Psoas muscle (tissue), 8 donors: ENCODE measurements at regions of chr1 and their contacts with region 1.

Region 1: DNA sequence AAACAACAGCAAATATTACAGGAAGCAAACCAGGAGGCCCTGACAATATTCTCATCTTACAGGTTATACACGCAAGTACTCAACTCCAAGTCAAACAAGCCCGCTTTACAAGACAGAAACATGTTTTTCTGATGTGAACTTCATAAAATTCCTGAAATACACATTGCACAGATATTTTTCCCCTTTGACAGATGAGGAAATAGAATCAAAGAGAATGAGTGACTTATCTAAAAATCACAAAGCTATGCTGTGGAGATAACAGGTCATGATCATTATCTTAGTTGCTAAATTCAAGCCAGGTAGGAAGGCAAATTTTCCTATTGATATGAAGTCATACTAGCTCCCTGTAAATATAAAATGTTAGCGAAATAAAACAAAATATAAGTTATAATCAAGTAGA is 18.3 kb downstream of the UBR4 start:
- DNase-seq: no peak
- ATAC-seq: no peak
- H3K4me3 ChIP-seq: no peak overlapping the region
- H3K27ac ChIP-seq: no peak overlapping the region
- H3K4me1 ChIP-seq: no peaks in the 10 kb centered on the region
- H3K27me3 ChIP-seq: no peaks in the 10 kb centered on the region
- CTCF ChIP-seq: no peak

Region 2: DNA sequence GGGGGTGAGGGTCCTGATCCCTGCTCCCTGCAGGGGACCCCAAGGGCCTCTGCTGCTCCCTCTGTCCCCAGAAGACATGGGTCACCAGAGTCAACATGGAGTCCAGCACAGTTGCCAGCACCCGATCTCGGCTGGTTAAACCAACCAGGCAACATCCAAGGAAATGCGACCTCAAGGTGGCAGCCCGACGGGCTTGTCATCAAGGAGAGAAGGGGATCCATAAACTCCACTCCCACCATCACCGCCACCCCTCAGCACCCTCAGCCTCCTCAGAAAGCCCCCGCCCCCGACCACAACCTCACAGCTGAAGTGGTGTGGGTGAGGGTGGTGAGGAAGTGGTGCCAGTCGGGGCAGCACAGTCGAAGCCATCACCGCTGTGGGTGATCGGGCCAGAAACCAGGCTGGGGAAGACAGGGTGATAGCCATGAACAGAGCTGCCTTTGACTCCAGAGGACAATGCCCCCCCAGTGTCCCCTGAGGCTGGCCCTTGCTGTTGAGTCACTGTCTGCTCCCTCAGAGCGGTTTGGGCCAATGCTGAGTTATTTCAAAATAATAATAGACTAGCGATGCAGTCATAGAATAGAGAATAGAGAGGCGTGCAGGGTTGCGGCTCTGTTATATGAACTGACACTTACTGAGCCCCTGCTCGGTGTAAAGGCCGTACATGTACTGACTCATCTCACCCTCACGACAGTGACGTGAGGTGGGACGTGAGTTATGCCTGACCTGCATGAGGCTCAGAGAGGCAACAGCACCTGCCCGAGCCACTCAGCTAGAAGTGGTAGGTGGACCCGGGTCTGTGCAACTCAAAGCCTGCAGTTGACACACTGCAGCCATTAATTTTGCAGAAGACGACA is 146.6 kb before region 1 on chr1:
- intact Hi-C with region 1: no loop called
- DNase-seq: no peak
- ATAC-seq: peak in 1 of 4 donors; percentile 62
- H3K4me3 ChIP-seq: no peak overlapping the region
- H3K27ac ChIP-seq: no peak overlapping the region
- H3K4me1 ChIP-seq: no peaks in the 10 kb centered on the region
- H3K27me3 ChIP-seq: peaks cover 0 to 23% (median 6%) of the 10 kb centered on the region in 3 donors
- CTCF ChIP-seq: no peak

Region 3: DNA sequence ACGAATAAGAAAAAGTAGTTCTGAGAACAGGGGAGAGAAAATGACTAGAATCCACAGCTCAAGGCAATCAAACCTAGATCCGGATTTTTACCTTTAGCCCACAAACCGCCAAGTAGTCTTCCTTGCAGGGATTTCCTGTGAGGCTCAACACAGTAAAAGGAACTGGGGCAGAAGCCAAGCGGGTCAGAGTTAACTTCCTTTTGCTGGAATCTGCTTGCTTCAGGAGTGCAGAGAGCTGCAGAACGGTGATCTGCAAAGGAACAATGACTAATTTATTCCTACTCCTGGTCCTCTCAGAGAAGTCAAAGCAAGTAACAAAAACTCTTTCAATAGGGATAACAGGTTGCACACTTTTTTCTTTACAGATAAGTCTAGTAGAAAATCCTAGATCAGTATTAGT is 35.1 kb before region 1 on chr1:
- intact Hi-C with region 1: loop called (anchors 5 kb)
- DNase-seq: peak in 1 of 2 donors; percentile 23
- ATAC-seq: peak in 3 of 4 donors; percentile 39 to 57 (median 52)
- H3K4me3 ChIP-seq: no peak overlapping the region
- H3K27ac ChIP-seq: no peak overlapping the region
- H3K4me1 ChIP-seq: no peaks in the 10 kb centered on the region
- H3K27me3 ChIP-seq: no peaks in the 10 kb centered on the region
- CTCF ChIP-seq: no peak

Region 4: DNA sequence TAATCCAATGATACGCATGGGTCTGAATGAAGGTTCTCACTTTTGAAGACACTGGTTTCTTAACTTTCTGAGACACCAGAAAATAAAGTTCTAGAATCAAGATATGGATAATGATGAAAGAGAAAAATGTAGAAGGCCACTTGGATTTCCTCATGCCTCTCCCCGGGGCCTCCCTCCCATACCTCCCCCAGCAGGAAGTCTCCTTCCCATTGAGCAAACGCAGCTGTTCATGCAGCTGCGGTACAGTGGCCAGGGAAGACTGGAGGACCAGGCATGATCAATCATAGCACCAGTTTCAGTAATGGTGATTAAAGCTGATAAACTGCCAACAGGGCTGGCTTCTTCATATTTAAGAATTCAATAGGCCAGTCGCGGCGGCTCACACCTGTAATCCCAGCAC is 29.2 kb after region 1 on chr1:
- intact Hi-C with region 1: no loop called
- DNase-seq: no peak
- ATAC-seq: no peak
- H3K4me3 ChIP-seq: no peak overlapping the region
- H3K27ac ChIP-seq: peak overlapping the region; percentile 85
- H3K4me1 ChIP-seq: peaks cover 45% of the 10 kb centered on the region
- H3K27me3 ChIP-seq: no peaks in the 10 kb centered on the region
- CTCF ChIP-seq: no peak